Activated CD4-positive, alpha-beta T cell treated with anti-CD3 and anti-CD28 coated beads for 36 hours (primary cell): ENCODE measurements at regions of chr1 and their contacts with region 1.

Region 1: DNA sequence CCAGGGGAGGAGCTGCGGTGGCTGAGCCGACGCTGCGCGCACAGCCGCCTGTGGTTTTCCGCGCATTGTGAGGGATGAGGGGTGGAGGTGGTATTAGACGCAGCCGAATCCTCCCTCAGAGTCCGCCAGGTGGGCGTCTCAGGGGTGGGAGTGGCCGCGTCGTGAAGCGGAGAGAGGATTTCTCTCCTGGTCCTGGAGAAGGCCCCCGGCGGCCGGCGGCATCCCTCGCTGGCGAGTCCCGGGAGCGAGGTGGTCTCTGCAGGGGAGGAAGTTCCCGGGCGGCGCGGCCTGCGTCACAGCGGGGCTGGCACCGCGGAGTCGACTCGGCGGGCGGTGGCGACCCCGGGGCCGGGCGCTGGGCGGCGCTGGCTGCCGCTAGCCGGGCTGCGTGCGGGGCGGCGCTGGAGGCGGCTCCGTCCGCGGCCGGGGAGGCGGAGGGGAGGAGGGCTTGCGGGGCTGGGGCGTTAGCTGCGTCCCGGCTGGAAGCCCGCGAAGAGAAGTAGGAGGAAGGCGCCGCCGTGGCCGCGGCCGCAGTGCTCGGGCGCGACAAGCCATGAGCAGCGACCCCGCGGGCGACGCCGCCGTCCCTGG is at the start of gene LRRC8C:
- DNase-seq: peak; percentile 93
- ATAC-seq: peak; percentile 77
- H3K4me3 Mint-ChIP-seq: peak within 1 kb of the TSS; percentile 96
- H3K27ac Mint-ChIP-seq: peak within 1 kb of the TSS; percentile 98
- H3K4me1 Mint-ChIP-seq: peaks cover 66% of the 10 kb centered on the region
- H3K27me3 Mint-ChIP-seq: no peaks in the 10 kb centered on the region
- total RNA-seq, gene LRRC8C: 31.5 to 37.1 TPM

Region 2: DNA sequence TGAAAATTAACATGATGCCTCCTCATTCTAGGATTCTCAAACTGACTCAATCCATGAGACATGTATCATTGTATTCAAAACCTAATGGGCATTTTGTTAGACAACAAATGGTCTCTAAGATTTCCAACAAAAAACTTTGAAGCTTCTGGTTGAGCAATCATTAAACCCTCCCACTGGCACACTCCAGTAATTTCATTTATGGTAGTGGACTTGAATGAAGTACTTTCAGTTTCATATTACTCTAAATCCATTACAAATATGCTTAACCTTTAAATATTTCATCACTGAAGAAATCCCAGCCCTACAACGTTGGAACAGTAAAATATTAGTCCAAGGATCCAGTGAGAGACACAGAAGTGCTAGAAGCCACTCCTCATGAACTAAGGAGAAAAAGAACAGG is 225.4 kb before region 1 on chr1:
- CTCF ChIA-PET with region 1: no interaction called
- POLR2A ChIA-PET with region 1: no interaction called
- intact Hi-C with region 1: no loop called
- DNase-seq: no peak
- ATAC-seq: peak; percentile 47
- H3K4me3 Mint-ChIP-seq: peak overlapping the region; percentile 48
- H3K27ac Mint-ChIP-seq: peak overlapping the region; percentile 41
- H3K4me1 Mint-ChIP-seq: peaks cover 20% of the 10 kb centered on the region
- H3K27me3 Mint-ChIP-seq: peaks cover 7% of the 10 kb centered on the region

Region 3: GRCh38 chr1:89547563-89548485 is 84.9 kb before region 1 on chr1:
- CTCF ChIA-PET with region 1: interaction called, 3 read pairs
- POLR2A ChIA-PET with region 1: no interaction called
- intact Hi-C with region 1: loop called in 1 of 2 experiments (anchors 1 kb)
- DNase-seq: peak; percentile 70
- ATAC-seq: peak; percentile 48
- H3K4me3 Mint-ChIP-seq: peak overlapping the region; percentile 20
- H3K27ac Mint-ChIP-seq: peak overlapping the region; percentile 95
- H3K4me1 Mint-ChIP-seq: peaks cover 86% of the 10 kb centered on the region
- H3K27me3 Mint-ChIP-seq: no peaks in the 10 kb centered on the region

Region 4: GRCh38 chr1:89652373-89652772 is 19.6 kb after region 1 on chr1:
- CTCF ChIA-PET with region 1: interaction called, 6 read pairs
- POLR2A ChIA-PET with region 1: no interaction called
- intact Hi-C with region 1: loop called in 1 of 2 experiments (anchors 2 kb)
- DNase-seq: no peak
- ATAC-seq: no peak
- H3K4me3 Mint-ChIP-seq: no peak overlapping the region
- H3K27ac Mint-ChIP-seq: peak overlapping the region; percentile 81
- H3K4me1 Mint-ChIP-seq: peaks cover 89% of the 10 kb centered on the region
- H3K27me3 Mint-ChIP-seq: no peaks in the 10 kb centered on the region

Region 5: GRCh38 chr1:89757532-89757931 is 124.8 kb after region 1 on chr1:
- CTCF ChIA-PET with region 1: interaction called, 157 read pairs
- POLR2A ChIA-PET with region 1: interaction called, 13 read pairs
- intact Hi-C with region 1: loop called in 1 of 2 experiments (anchors 1 kb)
- DNase-seq: peak; percentile 84
- ATAC-seq: peak; percentile 88
- H3K4me3 Mint-ChIP-seq: peak overlapping the region; percentile 54
- H3K27ac Mint-ChIP-seq: peak overlapping the region; percentile 85
- H3K4me1 Mint-ChIP-seq: peaks cover 84% of the 10 kb centered on the region
- H3K27me3 Mint-ChIP-seq: no peaks in the 10 kb centered on the region

Region 6: GRCh38 chr1:89820422-89821321 is 187.9 kb after region 1 on chr1 and contains the start of gene LRRC8D:
- CTCF ChIA-PET with region 1: interaction called, 3 read pairs
- POLR2A ChIA-PET with region 1: no interaction called
- intact Hi-C with region 1: loop called in 1 of 2 experiments (anchors 1 kb)
- DNase-seq: peak; percentile 83
- ATAC-seq: peak; percentile 84
- H3K4me3 Mint-ChIP-seq: peak within 1 kb of the TSS; percentile 82
- H3K27ac Mint-ChIP-seq: peak within 1 kb of the TSS; percentile 69
- H3K4me1 Mint-ChIP-seq: peaks cover 34% of the 10 kb centered on the region
- H3K27me3 Mint-ChIP-seq: no peaks in the 10 kb centered on the region
- total RNA-seq, gene LRRC8D: 24.3 to 30.0 TPM

Region 7: DNA sequence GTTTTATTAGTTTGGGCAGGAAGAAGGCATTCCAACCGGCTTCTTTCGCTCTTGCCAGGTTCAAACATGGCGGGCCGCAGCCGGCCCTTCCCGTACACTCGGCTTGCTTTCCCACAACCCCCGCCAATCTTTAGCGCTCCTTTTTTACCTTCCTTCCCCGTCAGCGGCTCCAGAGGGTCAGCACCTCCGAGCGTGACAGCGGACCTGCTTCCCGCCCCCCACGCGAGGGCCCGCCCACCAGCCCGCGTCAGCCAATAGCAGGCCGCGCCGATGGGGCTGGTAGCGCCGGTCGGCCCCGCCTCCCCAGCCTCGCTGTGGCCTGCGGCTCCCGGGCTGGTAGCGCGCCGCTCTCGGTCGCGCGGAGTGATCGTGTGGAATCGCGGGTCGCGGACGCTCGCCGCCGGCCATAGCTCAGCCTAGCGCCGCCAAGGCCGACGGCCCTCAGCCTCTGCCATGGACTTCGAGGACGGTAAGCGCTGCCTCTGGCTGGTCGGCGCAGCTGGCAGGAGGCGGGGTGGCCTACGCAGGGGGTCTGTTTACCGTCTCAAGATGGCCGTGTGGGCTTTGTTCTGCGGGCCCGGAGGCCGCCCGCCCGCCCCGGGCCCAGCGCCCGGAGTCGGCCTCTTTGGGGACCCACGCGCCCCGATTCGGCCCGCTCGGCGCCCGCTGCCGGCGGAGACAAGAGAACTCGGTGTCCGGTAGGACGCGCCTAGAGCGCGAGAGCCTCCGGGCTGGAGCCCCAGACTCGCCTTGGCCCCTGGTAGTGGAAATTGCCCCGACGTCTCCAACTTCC is 362.2 kb after region 1 on chr1 and contains the start of gene ZNF326:
- CTCF ChIA-PET with region 1: no interaction called
- POLR2A ChIA-PET with region 1: no interaction called
- intact Hi-C with region 1: loop called (anchors 1 to 5 kb)
- DNase-seq: peak; percentile 97
- ATAC-seq: peak; percentile 95
- H3K4me3 Mint-ChIP-seq: peak within 1 kb of the TSS; percentile 94
- H3K27ac Mint-ChIP-seq: peak within 1 kb of the TSS; percentile 92
- H3K4me1 Mint-ChIP-seq: peaks cover 42% of the 10 kb centered on the region
- H3K27me3 Mint-ChIP-seq: no peaks in the 10 kb centered on the region
- total RNA-seq, gene ZNF326: 19.4 to 20.5 TPM